AG04450 (cell line): ENCODE measurements at regions of chr5 and their contacts with region 1.

Region 1: DNA sequence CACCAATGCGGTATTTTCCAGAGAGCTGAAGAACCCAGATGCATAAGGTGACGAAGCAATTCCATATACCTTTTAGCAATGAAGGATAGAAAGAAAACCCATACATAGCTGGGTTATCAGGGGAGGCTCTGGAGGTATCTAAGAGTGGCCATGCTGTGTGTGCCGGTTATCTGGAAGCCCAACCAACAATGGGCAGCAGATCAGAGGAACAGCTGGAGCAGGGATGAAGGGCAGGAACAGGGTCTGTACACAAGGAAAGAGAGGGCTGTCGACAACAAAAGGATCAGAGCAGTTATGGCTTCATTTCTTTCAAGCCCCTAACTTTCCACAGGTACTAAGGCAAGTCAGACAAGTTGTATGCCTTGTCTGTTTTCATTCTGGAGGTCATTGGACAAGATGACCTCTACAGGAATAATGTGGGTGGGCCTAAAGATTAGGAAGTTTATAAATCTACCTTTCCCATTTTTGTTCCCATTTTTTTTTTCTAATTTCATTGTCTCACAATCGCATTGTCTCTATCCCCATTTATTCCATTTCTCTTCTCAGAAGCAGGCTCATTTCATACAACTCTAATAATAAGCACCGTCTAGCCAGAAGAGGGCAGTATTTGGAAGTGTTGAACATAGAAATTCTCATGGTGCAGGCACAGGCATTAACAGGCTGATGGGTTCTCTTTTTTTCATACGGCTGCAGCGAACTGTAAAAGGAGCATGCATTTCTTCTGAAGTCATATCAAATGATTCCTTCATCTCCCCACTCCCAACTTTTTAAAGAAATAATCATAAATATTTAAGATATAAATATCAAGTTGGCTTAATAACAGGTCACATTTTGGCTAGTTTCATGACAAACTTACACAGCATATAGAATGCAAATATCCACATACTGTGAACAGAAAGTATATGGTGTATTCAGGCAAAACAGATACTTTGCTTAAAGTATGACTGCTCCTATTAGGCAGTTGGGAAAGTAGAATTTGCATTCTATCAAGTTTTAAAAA is 63.5 kb downstream of the ZNF474 start:
- DNase-seq: peak; percentile 41
- H3K4me3 ChIP-seq: no peak overlapping the region
- H3K27ac ChIP-seq: no peak overlapping the region
- H3K27me3 ChIP-seq: no peaks in the 10 kb centered on the region
- CTCF ChIP-seq: peak; percentile 58

Region 2: DNA sequence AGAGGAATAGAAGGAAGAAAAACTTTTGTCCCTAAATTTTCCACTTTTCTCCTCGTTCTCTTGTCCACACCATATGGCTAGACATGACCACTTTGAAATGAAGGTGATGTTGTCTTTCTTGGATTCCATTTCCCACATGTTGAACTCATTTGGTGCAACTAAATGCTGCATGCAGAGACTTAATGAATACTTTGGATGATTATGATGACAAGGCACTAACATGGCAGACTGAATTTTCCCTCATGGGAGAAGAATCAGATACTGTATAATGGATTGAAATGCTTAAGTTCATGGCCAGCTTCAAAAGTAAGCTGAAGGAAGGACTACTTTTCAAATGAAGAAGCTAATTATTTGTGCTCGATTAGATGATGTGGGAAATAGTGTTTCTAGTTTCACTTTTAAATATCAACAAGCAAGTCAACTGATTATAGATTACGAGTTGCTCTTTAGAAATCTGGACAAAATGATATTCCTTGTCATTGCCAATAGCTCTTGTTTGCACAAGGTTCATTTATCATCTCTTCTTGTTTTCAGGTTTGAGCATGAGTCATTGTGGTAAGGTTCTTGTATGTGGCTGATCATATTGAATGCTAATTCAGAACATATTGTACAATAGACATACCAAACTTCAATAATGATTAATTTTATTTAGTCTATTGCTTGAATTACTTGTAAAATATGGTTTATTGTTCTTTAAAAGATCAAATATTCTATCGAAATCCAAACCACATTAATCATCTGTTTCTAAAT is 842.4 kb before region 1 on chr5:
- CTCF ChIA-PET with region 1: no interaction called
- POLR2A ChIA-PET with region 1: no interaction called
- DNase-seq: no peak
- H3K4me3 ChIP-seq: no peak overlapping the region
- H3K27ac ChIP-seq: no peak overlapping the region
- H3K27me3 ChIP-seq: no peaks in the 10 kb centered on the region
- CTCF ChIP-seq: no peak

Region 3: GRCh38 chr5:121797681-121798518 is 394.9 kb before region 1 on chr5:
- CTCF ChIA-PET with region 1: no interaction called
- POLR2A ChIA-PET with region 1: no interaction called
- DNase-seq: no peak
- H3K4me3 ChIP-seq: no peak overlapping the region
- H3K27ac ChIP-seq: no peak overlapping the region
- H3K27me3 ChIP-seq: no peaks in the 10 kb centered on the region
- CTCF ChIP-seq: no peak

Region 4: DNA sequence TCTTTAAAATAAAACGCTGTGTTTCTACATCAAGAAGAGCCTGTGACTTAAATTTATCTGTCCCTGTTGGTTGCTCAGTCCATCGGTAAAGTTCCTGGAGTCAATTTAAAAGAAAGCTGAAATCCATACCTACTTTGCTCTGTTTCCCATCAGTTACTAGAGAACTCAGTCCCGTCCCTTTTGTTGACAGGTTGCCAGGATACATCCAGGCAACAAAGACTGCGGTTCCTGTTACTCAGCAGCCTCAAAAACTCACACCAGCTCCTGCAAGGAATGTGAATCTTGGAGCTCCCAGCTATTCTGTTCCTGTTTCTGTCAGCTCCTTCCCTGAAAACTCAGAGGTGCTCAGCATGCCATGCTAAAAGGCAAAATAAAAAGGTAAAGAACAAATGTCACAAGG is 63.5 kb before region 1 on chr5 and contains the start of gene ZNF474:
- CTCF ChIA-PET with region 1: no interaction called
- POLR2A ChIA-PET with region 1: no interaction called
- DNase-seq: peak; percentile 89
- H3K4me3 ChIP-seq: no peak within 1 kb of the TSS; the same call in 1 of the 2 replicates
- H3K27ac ChIP-seq: no peak within 1 kb of the TSS
- H3K27me3 ChIP-seq: no peaks in the 10 kb centered on the region
- CTCF ChIP-seq: no peak
- polyA plus RNA-seq, gene ZNF474: 0.37 TPM in 2 replicates

Region 5: GRCh38 chr5:122142480-122143164 is 50.2 kb before region 1 on chr5:
- CTCF ChIA-PET with region 1: no interaction called
- POLR2A ChIA-PET with region 1: no interaction called
- DNase-seq: no peak
- H3K4me3 ChIP-seq: no peak overlapping the region
- H3K27ac ChIP-seq: peak overlapping the region; percentile 22
- H3K27me3 ChIP-seq: no peaks in the 10 kb centered on the region
- CTCF ChIP-seq: no peak

Region 6: DNA sequence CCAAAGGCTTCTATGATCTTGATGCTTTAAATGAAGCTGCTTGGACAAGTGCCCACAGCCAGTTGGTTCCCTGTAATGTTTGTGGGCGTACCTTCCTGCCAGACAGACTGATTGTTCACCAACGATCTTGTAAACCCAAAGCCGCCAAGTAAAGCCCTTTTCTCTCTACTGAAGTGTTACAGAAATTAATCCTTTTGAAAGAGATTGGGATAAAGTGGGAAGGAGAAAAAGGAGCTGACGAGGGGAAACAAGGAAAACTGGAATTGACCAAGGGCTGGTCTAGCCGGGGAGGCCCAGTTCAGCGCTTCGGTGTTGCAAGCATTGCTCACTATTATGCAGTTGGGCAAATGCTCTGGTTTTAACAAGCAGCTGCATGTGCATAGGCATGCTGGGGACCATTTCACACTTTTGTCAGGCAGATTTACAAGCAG is 10.3 kb before region 1 on chr5:
- CTCF ChIA-PET with region 1: interaction called, 21 read pairs
- POLR2A ChIA-PET with region 1: no interaction called
- DNase-seq: peak; percentile 52
- H3K4me3 ChIP-seq: no peak overlapping the region
- H3K27ac ChIP-seq: peak overlapping the region; percentile 50
- H3K27me3 ChIP-seq: no peaks in the 10 kb centered on the region
- CTCF ChIP-seq: no peak

Region 7: GRCh38 chr5:122322801-122323548 is 130.2 kb after region 1 on chr5:
- CTCF ChIA-PET with region 1: interaction called, 15 read pairs
- POLR2A ChIA-PET with region 1: interaction called, 15 read pairs
- DNase-seq: no peak
- H3K4me3 ChIP-seq: no peak overlapping the region
- H3K27ac ChIP-seq: no peak overlapping the region
- H3K27me3 ChIP-seq: no peaks in the 10 kb centered on the region
- CTCF ChIP-seq: no peak

Region 8: DNA sequence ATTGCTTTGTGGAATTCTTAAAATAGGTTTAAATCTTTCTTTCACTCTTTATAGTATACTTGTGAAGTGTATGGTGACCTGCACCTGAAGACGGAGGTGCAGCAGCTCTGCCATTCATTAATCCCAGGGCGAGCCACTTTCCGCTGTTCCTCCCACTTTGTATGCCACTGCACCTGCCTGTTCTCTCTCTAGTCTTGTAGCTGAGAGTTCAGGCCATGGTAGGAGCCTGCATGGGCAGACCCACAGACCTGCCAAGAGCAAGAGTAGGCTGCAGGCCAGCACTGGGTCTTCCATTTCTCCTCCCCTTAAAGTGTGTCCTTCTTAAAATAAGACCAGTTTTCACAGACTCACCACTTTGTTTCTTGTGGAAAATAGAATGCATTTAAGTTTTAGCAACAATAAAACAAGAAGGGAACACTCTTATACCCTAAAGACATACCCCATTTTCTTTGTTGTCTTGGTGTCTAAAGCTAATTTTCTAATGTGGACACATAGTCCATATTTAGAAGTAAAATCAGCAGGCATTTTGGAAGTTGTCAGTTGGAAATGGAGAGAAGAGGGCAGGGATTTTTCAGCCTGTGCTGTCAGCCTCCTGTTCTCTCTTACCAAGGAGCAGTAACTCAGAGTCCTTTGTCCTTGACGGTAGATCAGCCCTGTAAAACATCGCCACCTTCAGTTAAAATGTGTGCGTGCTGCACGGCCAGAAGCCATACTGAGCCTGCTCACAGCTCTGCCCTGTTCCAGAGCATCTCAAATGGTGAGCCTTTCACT is 222.4 kb after region 1 on chr5:
- CTCF ChIA-PET with region 1: interaction called, 120 read pairs
- POLR2A ChIA-PET with region 1: no interaction called
- DNase-seq: peak; percentile 45
- H3K4me3 ChIP-seq: no peak overlapping the region
- H3K27ac ChIP-seq: no peak overlapping the region
- H3K27me3 ChIP-seq: no peaks in the 10 kb centered on the region
- CTCF ChIP-seq: peak; percentile 84

Region 9: DNA sequence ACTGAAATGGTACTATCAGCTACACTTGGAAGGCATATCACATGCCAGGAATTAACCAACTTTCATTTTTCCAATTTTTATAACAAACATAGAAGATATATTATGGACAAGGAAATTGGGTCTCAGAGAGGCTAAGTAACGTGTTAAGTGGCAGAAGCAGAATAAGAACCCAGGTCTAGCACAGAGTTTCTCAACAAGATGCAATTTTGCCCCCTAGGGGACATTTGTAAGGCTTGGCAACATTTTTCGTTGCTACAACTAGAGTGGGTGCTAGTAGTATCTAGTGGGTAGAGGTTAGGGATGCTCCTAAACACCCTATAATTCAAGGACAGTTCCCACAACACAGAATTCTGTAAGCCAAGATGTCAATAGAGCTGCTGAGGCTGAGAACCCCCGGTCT is 299.9 kb after region 1 on chr5:
- CTCF ChIA-PET with region 1: interaction called, 61 read pairs
- POLR2A ChIA-PET with region 1: no interaction called
- DNase-seq: no peak
- H3K4me3 ChIP-seq: no peak overlapping the region
- H3K27ac ChIP-seq: no peak overlapping the region
- H3K27me3 ChIP-seq: no peaks in the 10 kb centered on the region
- CTCF ChIP-seq: peak; percentile 52